ENCODE measurements at regions of chr7 and their contacts with region 1.

Region 1: GRCh38 chr7:26490650-26491624 is 199.3 kb downstream of the SNX10 start:
- DNase-seq: peak; percentile 83
- H3K4me3 Mint-ChIP-seq: peak overlapping the region; percentile 33
- H3K27ac Mint-ChIP-seq: peak overlapping the region; percentile 32
- H3K4me1 Mint-ChIP-seq: peaks cover 20% of the 10 kb centered on the region
- H3K27me3 Mint-ChIP-seq: no peaks in the 10 kb centered on the region
- CTCF ChIP-seq: no peak

Region 2: GRCh38 chr7:26398756-26399501 is 92.0 kb before region 1 on chr7:
- CTCF ChIA-PET with region 1: interaction called, 4 read pairs
- POLR2A ChIA-PET with region 1: interaction called, 8 read pairs
- intact Hi-C with region 1: loop called (anchors 10 kb)
- DNase-seq: peak; percentile 37
- H3K4me3 Mint-ChIP-seq: peak overlapping the region; percentile 97
- H3K27ac Mint-ChIP-seq: peak overlapping the region; percentile 59
- H3K4me1 Mint-ChIP-seq: peaks cover 9% of the 10 kb centered on the region
- H3K27me3 Mint-ChIP-seq: no peaks in the 10 kb centered on the region
- CTCF ChIP-seq: no peak

Region 3: GRCh38 chr7:26449175-26450165 is 41.5 kb before region 1 on chr7:
- CTCF ChIA-PET with region 1: interaction called, 3 read pairs
- POLR2A ChIA-PET with region 1: interaction called, 10 read pairs
- intact Hi-C with region 1: no loop called
- DNase-seq: peak; percentile 74
- H3K4me3 Mint-ChIP-seq: peak overlapping the region; percentile 11
- H3K27ac Mint-ChIP-seq: peak overlapping the region; percentile 55
- H3K4me1 Mint-ChIP-seq: peaks cover 15% of the 10 kb centered on the region
- H3K27me3 Mint-ChIP-seq: no peaks in the 10 kb centered on the region
- CTCF ChIP-seq: no peak

Region 4: GRCh38 chr7:26515314-26515842 is 24.4 kb after region 1 on chr7:
- CTCF ChIA-PET with region 1: interaction called, 3 read pairs
- POLR2A ChIA-PET with region 1: interaction called, 13 read pairs
- intact Hi-C with region 1: no loop called
- DNase-seq: peak; percentile 92
- H3K4me3 Mint-ChIP-seq: no peak overlapping the region
- H3K27ac Mint-ChIP-seq: no peak overlapping the region
- H3K4me1 Mint-ChIP-seq: no peaks in the 10 kb centered on the region
- H3K27me3 Mint-ChIP-seq: no peaks in the 10 kb centered on the region
- CTCF ChIP-seq: no peak

Region 5: GRCh38 chr7:26594553-26594952 is 103.6 kb after region 1 on chr7:
- CTCF ChIA-PET with region 1: no interaction called
- POLR2A ChIA-PET with region 1: no interaction called
- intact Hi-C with region 1: no loop called
- DNase-seq: no peak
- H3K4me3 Mint-ChIP-seq: no peak overlapping the region
- H3K27ac Mint-ChIP-seq: no peak overlapping the region
- H3K4me1 Mint-ChIP-seq: no peaks in the 10 kb centered on the region
- H3K27me3 Mint-ChIP-seq: no peaks in the 10 kb centered on the region
- CTCF ChIP-seq: no peak

Measured in MCF 10A (cell line).